ENCODE measurements at regions of chr1 and their contacts with region 1.

Region 1: DNA sequence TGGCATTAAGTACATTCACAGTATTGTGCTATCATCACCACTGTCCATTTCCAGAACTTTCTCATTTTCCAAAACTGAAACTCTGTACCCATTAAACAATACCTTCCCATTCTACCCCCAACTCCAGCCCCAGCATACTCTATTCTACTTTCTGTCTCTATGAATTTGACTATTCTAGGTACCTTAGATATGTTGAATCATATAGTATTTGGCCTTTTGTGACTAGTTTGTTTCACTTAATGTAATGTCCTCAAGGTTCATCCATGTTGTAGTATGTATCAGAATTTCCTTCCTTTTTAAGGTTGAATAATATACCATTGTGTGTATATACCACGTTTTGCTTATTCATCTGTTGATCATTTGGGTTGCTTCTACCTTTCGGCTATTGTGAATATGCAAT is 11.5 kb downstream of the MTR start:
- DNase-seq: no peak
- ATAC-seq: no peak
- H3K4me3 ChIP-seq: no peak overlapping the region
- H3K27ac ChIP-seq: no peak overlapping the region
- H3K4me1 ChIP-seq: peaks cover 16% of the 10 kb centered on the region
- H3K27me3 ChIP-seq: no peaks in the 10 kb centered on the region
- CTCF ChIP-seq: no peak

Region 2: DNA sequence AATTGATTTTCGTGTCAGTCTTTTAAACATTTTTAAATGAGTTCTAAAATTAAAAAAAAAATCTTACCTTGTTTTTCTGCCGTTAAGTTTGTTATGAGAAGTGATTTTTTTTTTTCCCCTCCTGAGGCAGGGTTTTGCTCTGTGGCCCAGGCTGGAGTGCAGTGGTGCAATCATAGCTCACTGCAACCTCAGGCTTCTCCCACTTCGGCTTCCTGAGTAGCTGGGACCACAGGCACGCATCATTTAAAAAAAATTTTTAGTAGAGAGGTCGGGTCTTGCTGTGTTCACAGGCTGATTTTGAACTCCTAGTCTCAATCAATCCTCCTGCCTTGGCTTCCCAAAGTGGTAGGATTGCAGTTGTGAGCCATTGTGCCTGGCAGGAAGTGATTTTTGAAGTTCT is 29.5 kb after region 1 on chr1:
- intact Hi-C with region 1: loop called in 1 of 2 experiments (anchors 2 kb)
- DNase-seq: no peak
- ATAC-seq: no peak
- H3K4me3 ChIP-seq: no peak overlapping the region
- H3K27ac ChIP-seq: no peak overlapping the region
- H3K4me1 ChIP-seq: no peaks in the 10 kb centered on the region
- H3K27me3 ChIP-seq: no peaks in the 10 kb centered on the region
- CTCF ChIP-seq: no peak

Region 3: DNA sequence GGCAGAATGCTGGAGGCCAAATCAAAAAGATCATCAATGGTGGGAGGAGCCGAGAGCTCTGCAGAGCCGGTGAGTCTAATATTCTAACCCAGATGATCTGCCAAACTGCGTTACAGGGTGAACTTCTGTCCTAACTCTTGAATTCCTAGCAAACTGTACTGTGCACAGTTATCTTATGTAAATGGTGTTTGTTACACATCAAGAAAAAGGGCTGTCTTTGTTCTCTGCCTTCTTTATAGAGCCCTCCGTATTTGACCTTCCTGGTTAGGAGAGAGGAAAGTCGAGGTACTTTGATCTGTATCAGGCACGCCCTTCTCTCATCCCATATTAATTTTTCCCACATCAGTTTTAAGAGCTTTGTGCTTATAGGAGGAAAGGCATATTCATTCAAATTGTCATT is 160.0 kb after region 1 on chr1:
- intact Hi-C with region 1: no loop called
- DNase-seq: no peak
- ATAC-seq: no peak
- H3K4me3 ChIP-seq: no peak overlapping the region
- H3K27ac ChIP-seq: no peak overlapping the region
- H3K4me1 ChIP-seq: no peaks in the 10 kb centered on the region
- H3K27me3 ChIP-seq: no peaks in the 10 kb centered on the region
- CTCF ChIP-seq: no peak

Region 4: GRCh38 chr1:237235091-237235490 is 428.5 kb after region 1 on chr1:
- intact Hi-C with region 1: no loop called
- DNase-seq: no peak
- ATAC-seq: no peak
- H3K4me3 ChIP-seq: no peak overlapping the region
- H3K27ac ChIP-seq: no peak overlapping the region
- H3K4me1 ChIP-seq: no peaks in the 10 kb centered on the region
- H3K27me3 ChIP-seq: no peaks in the 10 kb centered on the region
- CTCF ChIP-seq: no peak